ENCODE measurements at regions of chr4 and their contacts with region 1.

Region 1: GRCh38 chr4:112765317-112765975 is 128.5 kb downstream of the LARP7 start:
- DNase-seq: no peak
- H3K4me3 ChIP-seq: no peak overlapping the region
- H3K27ac ChIP-seq: no peak overlapping the region
- H3K4me1 ChIP-seq: peaks cover 0 to 8% (median 0%) of the 10 kb centered on the region in 4 donors
- H3K27me3 ChIP-seq: no peaks in the 10 kb centered on the region
- CTCF ChIP-seq: peak in 1 of 2 experiments; percentile 26

Region 2: DNA sequence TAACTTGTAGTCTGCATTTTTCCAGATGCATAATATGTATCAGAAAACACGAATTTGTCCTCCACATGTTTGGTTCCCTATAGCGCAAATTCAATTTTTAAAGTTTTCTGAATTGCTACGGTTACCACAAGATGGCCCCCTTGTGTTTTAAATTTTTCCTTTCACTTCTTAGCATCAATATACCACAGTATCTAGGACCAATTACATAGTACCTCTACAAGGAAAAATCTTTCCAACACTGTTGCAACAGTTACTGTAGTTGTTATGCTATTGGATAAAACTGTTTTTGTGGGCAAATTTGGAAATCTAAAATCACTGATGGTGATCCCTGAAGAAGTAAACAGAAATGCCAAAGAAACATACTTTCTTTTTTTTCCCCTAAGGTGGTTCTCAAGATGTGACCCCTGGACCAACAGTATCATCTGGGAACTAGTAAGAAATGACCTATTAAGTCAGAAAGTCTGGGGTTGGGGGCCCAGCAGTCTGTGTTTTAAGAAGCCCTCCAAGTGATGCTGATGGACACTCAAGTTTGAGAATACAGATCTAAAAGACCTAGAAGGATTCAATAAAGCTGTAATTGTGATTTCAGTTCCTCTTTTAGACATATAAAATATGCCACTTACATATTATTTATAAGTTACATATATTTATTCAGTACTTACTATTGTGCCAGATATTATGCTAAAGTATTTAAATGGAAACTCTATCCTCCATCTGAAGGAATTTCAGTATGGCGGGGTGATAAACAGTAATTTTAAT is 131.8 kb before region 1 on chr4:
- intact Hi-C with region 1: loop called (anchors 5 kb)
- DNase-seq: no peak
- H3K4me3 ChIP-seq: no peak overlapping the region
- H3K27ac ChIP-seq: no peak overlapping the region
- H3K4me1 ChIP-seq: peaks cover 0 to 16% (median 12%) of the 10 kb centered on the region in 4 donors
- H3K27me3 ChIP-seq: no peaks in the 10 kb centered on the region
- CTCF ChIP-seq: peak; percentile 39 to 44

Region 3: GRCh38 chr4:112938461-112939058 is 173.1 kb after region 1 on chr4:
- intact Hi-C with region 1: loop called (anchors 5 kb)
- DNase-seq: no peak
- H3K4me3 ChIP-seq: no peak overlapping the region
- H3K27ac ChIP-seq: no peak overlapping the region
- H3K4me1 ChIP-seq: peaks cover 0 to 4% (median 0%) of the 10 kb centered on the region in 4 donors
- H3K27me3 ChIP-seq: no peaks in the 10 kb centered on the region
- CTCF ChIP-seq: peak; percentile 75 to 77

Measured in tibial artery (tissue), 4 donors.